SK-N-SH (cell line): ENCODE measurements at regions of chr2 and their contacts with region 1.

Region 1: GRCh38 chr2:158179660-158180059 is 78.0 kb downstream of the UPP2 start:
- DNase-seq: no peak
- H3K4me3 ChIP-seq: no peak overlapping the region
- H3K27ac ChIP-seq: no peak overlapping the region
- H3K4me1 ChIP-seq: peaks cover 0 to 2% of the 10 kb centered on the region in 2 experiments; a peak in 2 of 4 replicates
- H3K27me3 ChIP-seq: no peaks in the 10 kb centered on the region
- CTCF ChIP-seq: peak; percentile 47
- EP300 ChIP-seq: no peak
- RAD21 ChIP-seq: peak; percentile 79

Region 2: GRCh38 chr2:158024288-158024898 is 155.3 kb before region 1 on chr2:
- CTCF ChIA-PET with region 1: interaction called, 13 read pairs
- POLR2A ChIA-PET with region 1: no interaction called
- DNase-seq: peak; percentile 55
- H3K4me3 ChIP-seq: no peak overlapping the region; a peak in 1 of 4 replicates
- H3K27ac ChIP-seq: no peak overlapping the region
- H3K4me1 ChIP-seq: peaks cover 0 to 10% of the 10 kb centered on the region in 2 experiments; a peak in 1 of 4 replicates
- H3K27me3 ChIP-seq: no peaks in the 10 kb centered on the region
- CTCF ChIP-seq: peak; percentile 93
- EP300 ChIP-seq: no peak
- RAD21 ChIP-seq: peak; percentile 83

Region 3: DNA sequence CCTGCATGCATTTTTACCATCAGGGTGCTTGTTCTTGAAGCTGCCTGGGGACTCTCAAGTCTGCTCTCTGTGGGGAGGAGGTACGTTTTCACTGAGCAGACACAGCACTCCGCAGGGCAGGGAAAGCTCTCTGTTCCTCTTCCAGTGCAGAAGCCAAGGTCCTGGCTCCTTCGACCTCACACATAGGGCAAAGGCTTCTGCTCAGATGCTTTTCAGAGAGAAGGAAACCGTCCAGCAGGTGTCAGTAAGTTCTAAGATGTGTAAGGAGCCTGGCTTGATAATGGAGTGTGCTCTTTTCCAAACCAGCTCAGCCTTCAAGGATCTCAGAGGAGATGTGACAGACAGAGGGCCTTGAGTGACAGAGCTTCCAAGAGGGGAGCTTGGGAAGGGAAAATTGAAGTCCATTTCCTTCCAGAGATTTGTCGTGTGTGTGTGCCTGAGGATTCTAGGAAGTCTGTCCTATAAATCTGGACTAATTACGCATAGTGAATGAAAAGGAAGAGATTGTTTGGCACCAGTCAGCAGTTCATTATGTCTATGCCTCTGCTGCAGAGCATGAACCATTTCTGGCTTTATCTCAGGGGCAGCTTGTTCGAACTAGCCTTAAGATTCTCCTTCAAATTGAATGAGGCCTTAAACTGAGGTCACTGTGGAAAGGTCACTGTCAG is 145.3 kb before region 1 on chr2:
- CTCF ChIA-PET with region 1: interaction called, 20 read pairs
- POLR2A ChIA-PET with region 1: no interaction called
- DNase-seq: peak; percentile 39
- H3K4me3 ChIP-seq: no peak overlapping the region
- H3K27ac ChIP-seq: no peak overlapping the region
- H3K4me1 ChIP-seq: peaks cover 0 to 5% of the 10 kb centered on the region in 2 experiments; a peak in 1 of 4 replicates
- H3K27me3 ChIP-seq: no peaks in the 10 kb centered on the region
- CTCF ChIP-seq: peak; percentile 53
- EP300 ChIP-seq: no peak
- RAD21 ChIP-seq: peak; percentile 80

Region 4: GRCh38 chr2:158456309-158457066 is 276.8 kb after region 1 on chr2 and contains the starts of genes CCDC148 and PKP4:
- CTCF ChIA-PET with region 1: interaction called, 15 read pairs
- POLR2A ChIA-PET with region 1: no interaction called
- DNase-seq: peak; percentile 95
- H3K4me3 ChIP-seq: peak within 1 kb of the TSS; percentile 76 to 77
- H3K27ac ChIP-seq: peak within 1 kb of the TSS; percentile 72 to 87
- H3K4me1 ChIP-seq: peaks cover 15 to 23% of the 10 kb centered on the region in 2 experiments; a peak in 3 of 4 replicates
- H3K27me3 ChIP-seq: no peaks in the 10 kb centered on the region
- CTCF ChIP-seq: 0 out of 2 replicates have a peak, but pooled peaks have one; percentile 7
- EP300 ChIP-seq: no peak
- RAD21 ChIP-seq: no peak
- polyA plus RNA-seq, gene CCDC148: 0.18 TPM in 1 of 2 replicates, not detected in the other
- polyA plus RNA-seq, gene PKP4: 10.9 and 13.8 TPM in 2 replicates

Region 5: DNA sequence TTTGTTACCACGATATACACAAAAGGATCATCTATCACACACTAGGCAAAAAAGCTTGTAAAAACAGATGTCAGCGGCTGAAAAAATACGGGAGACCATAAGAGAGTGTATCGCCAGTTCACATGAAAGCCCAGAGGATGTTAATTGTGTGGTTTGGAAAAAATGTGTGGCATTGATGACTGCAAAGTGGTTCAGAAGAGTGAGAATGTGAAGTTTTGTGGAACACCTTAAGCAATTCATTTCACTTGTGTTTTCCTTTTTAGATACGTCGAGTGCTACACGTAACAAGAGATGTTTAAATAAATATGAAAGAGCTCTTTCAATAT is 553.7 kb after region 1 on chr2:
- CTCF ChIA-PET with region 1: interaction called, 10 read pairs
- POLR2A ChIA-PET with region 1: no interaction called
- DNase-seq: no peak
- H3K4me3 ChIP-seq: no peak overlapping the region
- H3K27ac ChIP-seq: no peak overlapping the region
- H3K4me1 ChIP-seq: no peaks in the 10 kb centered on the region
- H3K27me3 ChIP-seq: no peaks in the 10 kb centered on the region; the same call in 1 of the 2 replicates
- CTCF ChIP-seq: no peak
- EP300 ChIP-seq: no peak
- RAD21 ChIP-seq: no peak